ENCODE measurements at regions of chr19 and their contacts with region 1.

Region 1: GRCh38 chr19:36418287-36419001 is at the start of gene ZFP82:
- H3K4me3 ChIP-seq: peak within 1 kb of the TSS; percentile 46
- H3K27ac ChIP-seq: peak within 1 kb of the TSS; percentile 87
- H3K4me1 ChIP-seq: peaks cover 9% of the 10 kb centered on the region
- CTCF ChIP-seq: peak; percentile 76

Region 2: DNA sequence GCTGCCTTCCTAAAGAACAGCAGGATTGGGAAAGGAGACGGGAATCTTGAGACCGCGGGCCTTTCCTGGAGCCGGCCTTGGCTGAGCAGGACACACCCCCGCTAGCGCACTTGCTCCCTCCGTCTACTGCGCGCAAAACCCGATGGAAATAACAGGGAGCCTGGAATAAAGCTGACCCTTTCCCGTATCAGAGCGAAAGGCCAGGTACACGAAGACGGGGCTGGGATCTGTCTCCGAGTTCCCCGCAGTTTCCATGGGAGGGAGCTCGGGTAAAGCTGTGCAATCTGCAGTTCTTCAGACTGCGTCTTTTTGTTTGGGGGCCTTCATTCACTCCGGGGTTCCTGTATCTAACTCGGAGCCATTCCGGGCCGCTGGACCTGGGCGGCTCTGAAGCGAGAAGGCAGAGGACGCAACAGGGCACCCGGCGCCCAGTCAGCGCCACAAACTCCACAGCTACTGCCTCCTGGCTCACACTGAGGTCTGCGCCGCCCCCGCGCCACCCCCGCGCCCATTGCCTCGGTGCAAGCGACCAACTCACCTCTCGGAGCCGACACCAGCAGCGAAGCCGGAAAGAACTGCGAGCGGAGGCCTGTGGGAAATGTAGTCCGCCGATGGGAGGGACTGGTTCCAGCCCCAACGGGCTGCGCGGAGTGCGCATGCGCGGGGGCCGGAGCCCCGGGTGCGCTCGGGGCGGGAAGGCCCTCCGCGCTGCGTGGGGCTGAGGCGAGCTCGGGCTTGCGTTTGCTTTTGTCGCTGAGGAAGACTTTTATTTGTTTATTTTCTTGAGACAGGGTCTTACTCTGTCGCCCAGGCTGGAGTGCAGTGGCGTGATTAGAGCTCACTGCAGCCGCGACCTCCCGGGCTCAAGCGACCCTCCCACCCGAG is 39.6 kb before region 1 on chr19 and contains the start of gene ZFP14:
- CTCF ChIA-PET with region 1: no interaction called
- POLR2A ChIA-PET with region 1: interaction called, 15 read pairs
- H3K4me3 ChIP-seq: peak within 1 kb of the TSS; percentile 63
- H3K27ac ChIP-seq: peak within 1 kb of the TSS; percentile 86
- H3K4me1 ChIP-seq: peaks cover 10% of the 10 kb centered on the region
- CTCF ChIP-seq: peak; percentile 85

Measured in HEK293 (cell line).